Activated naive CD4-positive, alpha-beta T cell treated with anti-CD3 and anti-CD28 coated beads for 36 hours (primary cell): ENCODE measurements at regions of chr9 and their contacts with region 1.

Region 1: DNA sequence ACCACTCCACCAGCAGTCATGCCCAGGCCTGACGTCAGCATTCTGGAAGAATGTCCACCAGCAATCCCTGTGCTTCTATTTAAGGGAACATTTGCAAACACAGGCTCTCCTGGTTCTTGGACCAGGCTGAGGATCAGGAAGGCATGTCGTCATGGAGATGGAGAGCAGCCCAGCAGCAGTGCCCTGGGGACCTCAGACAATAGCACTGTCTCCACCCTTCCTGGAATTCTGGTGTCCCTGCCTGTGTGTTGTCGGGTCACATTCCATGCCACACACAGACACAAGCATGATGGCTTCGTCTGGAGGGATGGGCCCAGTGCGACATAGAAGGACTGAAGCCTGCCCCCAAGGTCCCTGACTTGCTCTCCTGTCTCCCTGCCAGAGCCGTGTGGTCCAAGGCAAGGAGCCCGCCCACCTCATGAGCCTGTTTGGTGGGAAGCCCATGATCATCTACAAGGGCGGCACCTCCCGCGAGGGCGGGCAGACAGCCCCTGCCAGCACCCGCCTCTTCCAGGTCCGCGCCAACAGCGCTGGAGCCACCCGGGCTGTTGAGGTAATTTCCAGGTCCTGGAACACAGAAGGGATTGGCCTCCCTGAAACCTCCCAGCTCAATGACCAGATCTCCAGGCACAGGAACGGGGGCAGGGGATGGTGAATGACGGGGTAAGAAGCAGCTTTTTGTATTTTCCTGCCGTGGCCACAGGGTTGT is 43.8 kb downstream of the STOM start:
- DNase-seq: no peak
- H3K4me3 Mint-ChIP-seq: no peak overlapping the region
- H3K27ac Mint-ChIP-seq: no peak overlapping the region
- H3K4me1 Mint-ChIP-seq: peaks cover 5% of the 10 kb centered on the region
- H3K27me3 Mint-ChIP-seq: no peaks in the 10 kb centered on the region

Region 2: DNA sequence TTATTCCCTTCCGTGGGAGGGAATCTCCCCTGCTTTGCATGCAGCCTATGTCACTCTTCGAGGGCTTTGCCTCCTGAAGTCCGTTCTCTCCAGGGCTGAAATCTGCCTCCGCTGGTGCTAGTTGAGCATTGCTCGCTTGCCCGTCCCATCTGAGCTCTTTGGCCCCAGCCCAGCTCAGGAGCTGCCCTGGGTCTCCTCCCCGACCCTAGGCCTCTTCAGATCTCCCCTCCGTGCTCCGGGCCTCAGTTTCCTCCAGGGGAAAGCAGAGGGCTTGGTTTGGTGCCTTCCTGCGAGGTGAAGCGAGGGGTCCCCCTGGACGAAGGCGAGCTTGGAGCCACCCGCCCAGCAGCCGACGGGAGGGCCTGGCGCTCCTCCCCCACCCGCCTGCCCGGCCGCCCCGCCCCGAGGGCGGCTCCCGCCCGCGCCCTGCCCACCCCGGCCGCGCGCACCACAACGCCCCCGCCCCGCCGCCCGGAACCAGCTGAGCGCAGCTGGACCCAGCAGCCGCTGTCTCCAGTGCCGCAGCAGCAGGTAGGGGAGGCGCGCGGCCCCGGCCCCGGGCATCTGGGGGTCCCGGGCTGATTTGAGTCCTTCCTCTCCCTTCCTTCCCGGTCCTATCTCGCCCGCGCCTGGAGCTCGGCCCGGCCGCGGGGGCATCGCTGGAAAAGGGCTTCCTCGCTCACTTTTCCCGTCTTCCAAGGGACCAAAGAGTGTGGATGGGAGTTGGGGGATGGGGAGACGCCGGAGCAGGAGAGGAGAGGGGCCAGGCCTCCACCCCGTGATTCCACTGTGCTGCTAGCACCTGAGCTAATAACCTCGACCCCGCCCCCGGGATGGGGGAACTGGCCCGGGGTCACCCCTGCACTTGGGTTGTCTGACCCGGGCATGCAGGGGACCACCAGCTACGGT is 58.3 kb before region 1 on chr9 and contains the start of gene GSN:
- CTCF ChIA-PET with region 1: no interaction called
- intact Hi-C with region 1: no loop called
- DNase-seq: peak; percentile 51
- H3K4me3 Mint-ChIP-seq: peak within 1 kb of the TSS; percentile 61
- H3K27ac Mint-ChIP-seq: no peak within 1 kb of the TSS
- H3K4me1 Mint-ChIP-seq: peaks cover 10% of the 10 kb centered on the region
- H3K27me3 Mint-ChIP-seq: peaks cover 18% of the 10 kb centered on the region
- total RNA-seq, gene GSN: 1.1 to 1.2 TPM

Region 3: GRCh38 chr9:121350993-121351561 is 24.8 kb after region 1 on chr9:
- CTCF ChIA-PET with region 1: interaction called, 16 read pairs
- intact Hi-C with region 1: loop called (anchors 1 kb)
- DNase-seq: no peak
- H3K4me3 Mint-ChIP-seq: no peak overlapping the region
- H3K27ac Mint-ChIP-seq: no peak overlapping the region
- H3K4me1 Mint-ChIP-seq: peaks cover 18% of the 10 kb centered on the region
- H3K27me3 Mint-ChIP-seq: no peaks in the 10 kb centered on the region

Region 4: DNA sequence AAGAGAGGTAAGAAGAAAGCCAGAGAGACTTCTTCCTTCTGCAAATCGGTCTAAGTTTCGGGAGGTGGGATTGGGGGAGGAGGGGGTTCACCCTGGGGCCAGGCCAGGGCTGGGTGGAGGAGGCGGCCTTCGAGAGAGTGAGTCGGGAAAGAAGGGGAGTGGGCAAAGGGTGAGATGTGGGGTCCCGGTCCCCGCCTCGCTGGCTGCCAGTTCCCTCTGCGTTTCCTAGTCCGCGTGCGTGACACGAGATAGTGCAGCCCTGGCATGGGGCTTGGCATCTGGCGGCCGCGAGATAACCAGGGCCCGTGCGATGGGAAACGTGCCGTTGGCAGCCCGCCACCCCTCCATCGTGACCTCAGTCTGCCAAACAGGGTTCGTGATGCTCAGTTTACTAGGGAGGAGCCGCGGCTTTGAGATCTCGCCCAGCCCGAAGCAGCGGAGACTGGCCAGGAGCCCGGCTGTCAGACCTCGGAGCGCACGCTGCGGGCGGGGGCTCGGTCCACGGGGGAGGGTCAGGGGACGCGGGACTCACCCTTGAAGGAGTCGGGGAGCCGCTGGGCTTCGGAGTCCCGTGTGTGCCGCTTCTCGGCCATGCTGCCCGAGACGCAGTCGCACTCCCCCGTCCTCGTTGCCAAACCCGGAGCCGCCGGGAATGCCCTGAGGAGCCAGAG is 43.4 kb after region 1 on chr9 and contains the start of gene STOM:
- CTCF ChIA-PET with region 1: interaction called, 43 read pairs
- intact Hi-C with region 1: loop called (anchors 1 kb)
- DNase-seq: peak; percentile 74
- H3K4me3 Mint-ChIP-seq: peak within 1 kb of the TSS; percentile 82
- H3K27ac Mint-ChIP-seq: peak within 1 kb of the TSS; percentile 88
- H3K4me1 Mint-ChIP-seq: peaks cover 31% of the 10 kb centered on the region
- H3K27me3 Mint-ChIP-seq: no peaks in the 10 kb centered on the region
- total RNA-seq, gene STOM: 34.0 to 37.7 TPM

Region 5: DNA sequence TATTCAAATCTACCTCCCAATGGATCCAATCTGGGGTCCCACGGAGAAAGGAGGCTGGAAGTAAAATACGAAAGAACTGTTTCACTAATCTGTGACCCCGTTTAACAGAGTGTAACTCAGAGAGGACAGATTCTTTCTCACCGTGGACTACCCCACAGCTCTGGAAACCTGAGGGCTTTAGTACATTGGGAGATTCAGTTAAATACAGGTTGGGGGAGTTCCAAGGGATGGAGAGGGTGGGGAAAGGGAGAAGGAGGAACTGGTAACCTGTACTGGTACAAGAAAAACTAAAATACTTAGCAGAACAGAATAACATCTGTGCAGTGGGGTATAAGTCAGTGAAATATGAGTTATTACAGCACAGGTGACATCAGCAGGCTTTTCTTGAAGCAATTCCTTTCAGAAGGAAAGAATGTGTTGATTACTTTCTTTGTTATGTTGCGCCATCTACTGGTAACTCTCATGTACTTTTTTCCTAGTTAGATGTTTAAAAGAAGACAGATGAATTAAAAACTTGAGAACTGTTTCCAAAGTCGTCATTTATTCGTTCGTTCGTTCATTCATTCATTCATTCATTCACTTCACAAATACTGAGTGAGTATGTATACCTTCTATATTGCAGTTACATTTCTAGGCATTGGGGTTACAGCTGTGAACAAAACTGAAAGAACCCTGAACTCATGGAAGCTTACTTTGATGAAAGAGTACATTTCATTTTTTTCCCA is 73.8 kb after region 1 on chr9:
- CTCF ChIA-PET with region 1: interaction called, 315 read pairs
- intact Hi-C with region 1: no loop called
- DNase-seq: no peak
- H3K4me3 Mint-ChIP-seq: no peak overlapping the region
- H3K27ac Mint-ChIP-seq: no peak overlapping the region
- H3K4me1 Mint-ChIP-seq: no peaks in the 10 kb centered on the region
- H3K27me3 Mint-ChIP-seq: no peaks in the 10 kb centered on the region

Region 6: GRCh38 chr9:121498150-121498486 is 171.8 kb after region 1 on chr9:
- CTCF ChIA-PET with region 1: no interaction called
- intact Hi-C with region 1: loop called (anchors 10 kb)
- DNase-seq: peak; percentile 69
- H3K4me3 Mint-ChIP-seq: peak overlapping the region; percentile 61
- H3K27ac Mint-ChIP-seq: no peak overlapping the region
- H3K4me1 Mint-ChIP-seq: peaks cover 19% of the 10 kb centered on the region
- H3K27me3 Mint-ChIP-seq: peaks cover 52% of the 10 kb centered on the region